ENCODE measurements at regions of chr19 and their contacts with region 1.

Region 1: GRCh38 chr19:55516878-55517620 is 19.9 kb downstream of the SBK2 start:
- DNase-seq: peak; percentile 97
- H3K4me3 ChIP-seq: peak overlapping the region; percentile 44 to 65
- H3K27ac ChIP-seq: peak overlapping the region; percentile 84 to 91
- H3K4me1 ChIP-seq: peaks cover 11% of the 10 kb centered on the region
- H3K27me3 ChIP-seq: no peaks in the 10 kb centered on the region
- CTCF ChIP-seq: peak; percentile 75 to 96 (median 87)
- POLR2A ChIP-seq: no peak

Region 2: GRCh38 chr19:55053735-55054134 is 463.3 kb before region 1 on chr19:
- intact Hi-C with region 1: no loop called
- DNase-seq: no peak
- H3K4me3 ChIP-seq: no peak overlapping the region
- H3K27ac ChIP-seq: no peak overlapping the region
- H3K4me1 ChIP-seq: no peaks in the 10 kb centered on the region
- H3K27me3 ChIP-seq: no peaks in the 10 kb centered on the region
- CTCF ChIP-seq: no peak
- POLR2A ChIP-seq: no peak

Region 3: GRCh38 chr19:55599468-55600279 is 82.6 kb after region 1 on chr19 and contains the start of gene FIZ1:
- intact Hi-C with region 1: loop called (anchors 10 kb)
- DNase-seq: peak; percentile 99
- H3K4me3 ChIP-seq: peak within 1 kb of the TSS; percentile 69 to 88
- H3K27ac ChIP-seq: peak within 1 kb of the TSS; percentile 95 to 99
- H3K4me1 ChIP-seq: peaks cover 7% of the 10 kb centered on the region
- H3K27me3 ChIP-seq: no peaks in the 10 kb centered on the region
- CTCF ChIP-seq: peak in 1 of 3 experiments; percentile 10
- POLR2A ChIP-seq: no peak
- total RNA-seq, gene FIZ1: 16.5 to 17.4 TPM

Measured in testis (tissue), 5 donors.